ENCODE measurements at regions of chr2 and their contacts with region 1.

Region 1: DNA sequence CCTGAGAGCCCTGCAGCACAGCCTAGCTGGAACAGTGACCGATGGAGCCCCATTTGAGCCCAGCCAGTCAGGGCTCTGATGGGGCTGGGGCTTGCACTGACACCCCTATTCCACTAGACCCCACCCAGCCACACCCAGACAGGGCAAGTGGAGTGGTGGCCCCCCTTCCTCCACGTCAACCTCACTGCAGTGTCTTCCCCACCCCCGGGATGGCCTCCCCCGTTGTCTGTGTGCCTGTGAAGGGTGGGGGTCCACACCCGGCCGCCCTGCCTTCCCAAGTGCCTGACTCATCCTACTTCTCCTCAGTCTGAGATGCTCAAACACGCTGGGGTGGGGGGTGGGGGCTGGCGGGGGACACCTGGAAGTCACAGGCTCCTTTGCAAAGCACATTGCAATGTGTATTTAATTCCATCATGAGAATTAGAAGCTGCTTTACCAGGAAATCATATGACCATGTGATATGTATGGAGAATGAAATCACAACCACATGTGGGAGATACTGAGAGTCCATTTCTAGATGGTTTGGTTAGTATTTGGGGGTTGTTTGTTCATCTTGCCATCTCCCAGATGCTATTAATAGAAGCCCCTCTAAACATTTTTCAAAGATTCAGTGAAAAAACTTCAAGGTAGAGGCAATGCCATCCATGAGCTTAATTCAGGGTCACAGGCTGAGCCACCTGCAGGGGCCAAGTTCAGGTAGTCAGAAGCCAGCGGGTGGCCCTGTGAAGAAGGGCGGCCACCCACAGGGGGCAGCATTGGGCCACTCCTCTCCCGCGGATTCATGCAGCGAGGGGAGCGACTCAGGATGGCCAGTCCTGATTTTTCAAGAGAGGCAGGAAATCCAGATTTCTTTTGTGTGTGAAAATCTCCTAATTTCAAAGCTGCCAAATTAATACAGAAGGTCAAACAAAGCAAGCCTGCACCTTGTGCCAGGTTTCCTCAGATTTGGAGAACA is 22.7 kb upstream of the GMPPA start:
- DNase-seq: peak in 4 of 5 donors; percentile 67 to 79 (median 68)
- ATAC-seq: peak in 3 of 4 donors; percentile 31 to 67 (median 60)
- H3K4me3 ChIP-seq: no peak overlapping the region
- H3K27ac ChIP-seq: peak overlapping the region in 7 of 12 donors; percentile 25 to 72 (median 63)
- H3K4me1 ChIP-seq: peaks cover 0 to 31% (median 0%) of the 10 kb centered on the region in 12 donors
- H3K27me3 ChIP-seq: no peaks in the 10 kb centered on the region
- CTCF ChIP-seq: peak; percentile 79 to 90 (median 86)
- POLR2A ChIP-seq: no peak

Region 2: DNA sequence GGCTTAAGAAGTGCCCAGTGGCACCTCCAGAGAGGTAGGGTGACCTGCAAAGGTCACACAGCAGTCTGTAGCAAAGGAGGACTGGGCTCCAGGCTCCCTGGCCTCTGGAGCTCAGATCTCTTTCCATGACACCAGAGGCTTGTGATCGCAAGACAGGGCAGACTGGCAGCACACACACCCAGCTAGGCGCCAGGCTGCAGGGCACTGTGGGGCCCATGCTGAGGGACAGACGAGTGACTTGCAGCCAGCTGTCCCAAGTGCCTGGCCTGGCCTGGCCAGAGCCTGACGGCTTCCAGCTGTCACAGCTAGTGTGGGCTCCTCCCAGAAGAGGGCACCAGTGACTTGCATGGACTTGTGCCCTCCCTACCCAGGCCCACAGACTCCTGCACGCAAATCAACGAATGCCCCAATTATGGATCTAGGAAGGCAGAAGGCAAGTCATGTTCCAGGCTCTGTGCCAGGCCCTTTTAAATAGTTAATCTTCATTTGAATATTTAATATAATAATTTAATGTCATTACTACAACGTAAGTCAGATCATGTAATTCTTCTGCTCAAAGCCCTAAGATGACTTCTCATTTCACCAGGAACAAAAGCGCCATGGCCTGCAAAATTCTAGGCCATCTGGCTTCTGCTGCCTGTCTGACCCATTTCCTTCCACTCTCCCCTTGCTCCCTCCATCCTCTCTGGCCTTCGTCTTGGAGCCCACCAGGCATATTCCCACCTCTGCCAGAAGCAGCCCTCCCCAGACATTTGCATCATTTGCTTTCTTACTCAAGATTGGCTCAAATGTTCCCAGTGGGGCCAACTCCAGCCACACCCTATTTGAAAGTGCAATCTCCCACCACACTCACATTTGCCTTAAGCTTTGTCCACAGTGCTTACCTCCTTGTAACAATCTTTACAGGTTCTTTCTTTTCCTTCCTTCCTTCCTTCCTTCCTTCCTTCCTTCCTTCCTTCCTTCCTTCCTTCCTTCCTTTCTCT is 45.0 kb before region 1 on chr2:
- intact Hi-C with region 1: loop called in 1 of 10 experiments (anchors 2 kb)
- DNase-seq: peak in 4 of 5 donors; percentile 70 to 88 (median 80)
- ATAC-seq: peak; percentile 70 to 81 (median 74)
- H3K4me3 ChIP-seq: no peak overlapping the region
- H3K27ac ChIP-seq: peak overlapping the region in 11 of 12 donors; percentile 35 to 96 (median 75)
- H3K4me1 ChIP-seq: peaks cover 0 to 31% (median 7%) of the 10 kb centered on the region in 12 donors
- H3K27me3 ChIP-seq: peaks cover 0 to 20% (median 9%) of the 10 kb centered on the region in 9 donors
- CTCF ChIP-seq: peak in 8 of 12 donors; percentile 18 to 49 (median 36)
- POLR2A ChIP-seq: no peak

Region 3: GRCh38 chr2:219490186-219490585 is 14.2 kb after region 1 on chr2:
- intact Hi-C with region 1: no loop called
- DNase-seq: no peak
- ATAC-seq: no peak
- H3K4me3 ChIP-seq: no peak overlapping the region
- H3K27ac ChIP-seq: peak overlapping the region in 3 of 12 donors; percentile 24 to 60 (median 54)
- H3K4me1 ChIP-seq: peaks cover 0 to 45% (median 2%) of the 10 kb centered on the region in 12 donors
- H3K27me3 ChIP-seq: peaks cover 0 to 27% (median 3%) of the 10 kb centered on the region in 9 donors
- CTCF ChIP-seq: peak in 1 of 12 donors; percentile 15
- POLR2A ChIP-seq: no peak

Region 4: DNA sequence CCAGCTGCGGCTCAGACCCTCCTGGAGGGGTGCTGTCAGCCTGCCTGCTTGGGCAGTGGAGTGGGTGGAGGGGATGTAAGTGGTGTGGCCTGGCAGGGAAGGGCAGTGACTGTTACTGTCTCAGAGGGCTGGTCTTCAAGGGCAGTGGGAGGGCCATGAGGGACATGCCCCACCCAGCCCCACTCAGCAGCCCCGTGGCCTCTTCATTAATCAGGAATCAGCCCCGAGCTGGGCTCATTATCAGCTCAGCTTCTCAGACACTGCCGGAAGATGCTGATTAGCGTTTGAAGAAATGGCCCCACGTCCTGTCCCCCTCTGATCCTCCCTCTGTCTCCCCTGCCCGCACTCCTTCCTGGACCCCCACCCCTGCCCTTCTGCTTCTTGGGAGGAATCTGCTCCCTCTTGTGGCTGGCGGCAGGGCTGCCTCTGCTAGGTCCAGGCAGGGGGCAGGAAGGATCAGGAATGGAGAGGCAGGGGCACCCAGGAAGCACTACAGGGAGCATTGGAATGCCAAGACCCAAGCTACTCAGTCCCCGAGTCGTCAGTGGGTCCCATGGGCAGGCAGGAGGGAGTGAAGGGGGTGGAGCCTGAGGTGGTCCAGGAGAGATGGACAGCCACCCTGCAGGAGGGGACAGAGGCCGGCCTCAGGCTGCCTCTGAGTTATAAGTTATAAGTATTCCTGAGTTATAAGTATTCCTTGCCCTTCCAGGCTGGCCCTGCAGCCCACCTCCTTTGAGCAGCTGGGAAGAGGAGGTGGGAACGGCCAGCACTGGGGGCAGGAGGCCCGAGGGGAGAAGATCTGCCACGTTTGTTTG is 45.3 kb after region 1 on chr2:
- intact Hi-C with region 1: loop called in 5 of 10 experiments (anchors 2 to 5 kb)
- DNase-seq: peak in 2 of 5 donors; percentile 48 to 56
- ATAC-seq: peak; percentile 47 to 70 (median 66)
- H3K4me3 ChIP-seq: peak overlapping the region in 1 of 12 donors; percentile 11
- H3K27ac ChIP-seq: peak overlapping the region in 10 of 12 donors; percentile 15 to 80 (median 54)
- H3K4me1 ChIP-seq: peaks cover 0 to 44% (median 18%) of the 10 kb centered on the region in 12 donors
- H3K27me3 ChIP-seq: peaks cover 8 to 64% (median 18%) of the 10 kb centered on the region in 9 donors
- CTCF ChIP-seq: peak; percentile 25 to 69 (median 56)
- POLR2A ChIP-seq: no peak

Region 5: GRCh38 chr2:219552382-219553167 is 76.6 kb after region 1 on chr2:
- intact Hi-C with region 1: no loop called
- DNase-seq: peak; percentile 84 to 90 (median 88)
- ATAC-seq: peak; percentile 63 to 92 (median 86)
- H3K4me3 ChIP-seq: peak overlapping the region; percentile 27 to 75 (median 57)
- H3K27ac ChIP-seq: peak overlapping the region in 3 of 12 donors; percentile 19 to 57 (median 38)
- H3K4me1 ChIP-seq: peaks cover 0 to 21% (median 13%) of the 10 kb centered on the region in 12 donors
- H3K27me3 ChIP-seq: peaks cover 0 to 24% (median 3%) of the 10 kb centered on the region in 9 donors
- CTCF ChIP-seq: no peak
- POLR2A ChIP-seq: peak in 1 of 2 donors; percentile 23